Naive thymus-derived CD4-positive, alpha-beta T cell (primary cell): ENCODE measurements at regions of chr12 and their contacts with region 1.

Region 1: DNA sequence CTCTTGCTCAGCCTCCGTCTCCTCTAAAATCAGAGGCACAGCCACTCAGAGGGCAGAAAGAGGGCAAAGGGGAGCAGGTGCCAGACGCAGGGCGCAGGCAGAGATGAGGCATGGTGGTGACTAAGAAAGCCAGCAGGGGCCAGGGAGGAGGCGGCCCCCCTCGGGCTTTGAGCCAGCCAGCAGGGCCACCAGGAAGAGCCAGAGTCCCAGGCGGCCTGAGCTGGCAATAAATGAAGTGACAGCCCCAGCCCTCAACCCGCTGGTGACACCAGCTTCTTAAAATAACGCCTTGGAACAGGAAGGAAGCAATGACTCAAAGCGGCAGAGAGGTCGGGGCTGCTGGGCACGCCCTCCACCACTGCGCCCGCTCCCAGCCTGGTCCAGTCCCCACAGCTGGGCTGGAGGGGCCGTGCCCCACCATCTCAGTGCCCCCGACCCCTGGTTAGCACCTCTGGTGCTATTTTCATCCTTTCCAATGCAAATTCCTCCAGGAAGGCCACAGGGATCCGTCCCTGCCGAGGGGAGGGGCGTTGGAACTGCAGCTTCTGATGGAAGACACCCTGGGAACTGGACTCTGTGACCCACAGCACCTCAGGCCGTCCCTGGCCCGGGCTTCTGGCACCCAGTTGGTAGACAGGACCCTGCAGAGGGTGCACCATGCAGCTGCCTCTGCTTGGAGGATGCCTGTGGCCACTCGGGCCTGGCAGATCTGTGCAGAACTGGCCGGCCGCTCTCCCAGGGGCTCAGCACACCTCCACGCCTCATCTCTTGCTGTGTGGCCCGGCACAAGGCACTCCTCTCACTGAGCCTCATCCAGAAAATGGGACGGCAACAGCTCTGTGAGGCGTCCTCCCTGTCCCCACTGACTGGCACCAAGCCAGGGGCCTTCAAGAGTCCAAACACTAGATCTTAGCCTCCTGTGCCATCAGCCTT is 113.7 kb downstream of the NCOR2 start:
- DNase-seq: peak; percentile 47 to 82 (median 61)
- ATAC-seq: peak; percentile 78
- H3K4me3 ChIP-seq: peak overlapping the region; percentile 58
- H3K4me3 Mint-ChIP-seq: peak overlapping the region; percentile 42 to 77 (median 66)
- H3K27ac ChIP-seq: peak overlapping the region; percentile 48
- H3K27ac Mint-ChIP-seq: peak overlapping the region; percentile 10 to 87 (median 63)
- H3K4me1 ChIP-seq: peaks cover 51 to 74% of the 10 kb centered on the region in 2 donors
- H3K4me1 Mint-ChIP-seq: peaks cover 23 to 74% (median 55%) of the 10 kb centered on the region in 7 donors
- H3K27me3 ChIP-seq: no peaks in the 10 kb centered on the region
- H3K27me3 Mint-ChIP-seq: no peaks in the 10 kb centered on the region

Region 2: DNA sequence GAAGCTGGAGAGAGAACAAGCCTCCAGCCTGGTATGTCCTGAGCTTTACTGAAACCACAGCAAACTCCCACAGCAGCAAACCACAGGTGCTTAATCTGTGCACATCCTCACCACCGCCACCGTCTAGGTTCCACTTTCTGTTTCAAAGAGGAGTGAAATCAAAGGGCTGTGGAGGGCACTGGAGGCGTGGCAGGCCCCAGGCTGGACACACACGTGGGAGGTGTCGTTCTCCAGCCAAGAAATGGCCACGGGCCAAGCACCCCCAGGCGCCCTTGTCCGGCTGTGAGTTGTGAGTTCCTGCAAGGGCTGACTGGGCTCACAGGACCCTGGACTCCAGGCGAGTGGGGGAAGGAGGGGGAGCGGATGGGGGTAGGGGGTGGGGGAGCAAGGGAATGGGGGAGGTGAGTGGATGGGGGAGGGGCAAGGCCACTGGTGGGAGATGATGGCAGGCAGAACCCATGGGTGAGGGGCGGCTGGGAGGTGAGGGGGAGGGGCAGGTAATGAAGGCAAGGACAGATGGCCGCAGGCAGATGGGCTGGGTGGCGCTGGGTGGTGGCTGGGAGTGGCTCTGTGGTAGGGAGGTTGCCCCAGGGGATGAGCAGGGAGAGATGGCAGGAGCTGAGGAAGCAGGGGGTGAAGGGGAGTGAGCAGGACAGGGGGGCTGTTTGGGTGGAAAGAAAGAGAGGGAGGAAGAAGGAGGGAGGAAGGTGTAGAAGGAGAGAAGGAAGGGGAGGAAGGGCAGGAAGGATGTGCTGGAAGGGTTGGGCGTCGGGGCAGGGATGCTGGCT is 27.0 kb after region 1 on chr12:
- CTCF ChIA-PET with region 1: no interaction called
- POLR2A ChIA-PET with region 1: no interaction called
- intact Hi-C with region 1: loop called in 1 of 2 experiments (anchors 2 kb)
- DNase-seq: peak in 1 of 9 donors; percentile 50
- ATAC-seq: peak; percentile 40
- H3K4me3 ChIP-seq: no peak overlapping the region
- H3K4me3 Mint-ChIP-seq: peak overlapping the region in 2 of 10 donors; percentile 33 to 45
- H3K27ac ChIP-seq: no peak overlapping the region
- H3K27ac Mint-ChIP-seq: peak overlapping the region in 5 of 9 donors; percentile 19 to 78 (median 43)
- H3K4me1 ChIP-seq: peaks cover 0 to 8% of the 10 kb centered on the region in 2 donors
- H3K4me1 Mint-ChIP-seq: peaks cover 15 to 37% (median 31%) of the 10 kb centered on the region in 7 donors
- H3K27me3 ChIP-seq: no peaks in the 10 kb centered on the region
- H3K27me3 Mint-ChIP-seq: no peaks in the 10 kb centered on the region

Region 3: GRCh38 chr12:124609041-124609995 is 155.6 kb after region 1 on chr12:
- CTCF ChIA-PET with region 1: no interaction called
- POLR2A ChIA-PET with region 1: no interaction called
- intact Hi-C with region 1: loop called in 1 of 2 experiments (anchors 5 kb)
- DNase-seq: peak; percentile 38 to 94 (median 92)
- ATAC-seq: peak; percentile 95
- H3K4me3 ChIP-seq: peak overlapping the region; percentile 29
- H3K4me3 Mint-ChIP-seq: peak overlapping the region; percentile 50 to 90 (median 83)
- H3K27ac ChIP-seq: no peak overlapping the region
- H3K27ac Mint-ChIP-seq: peak overlapping the region in 8 of 9 donors; percentile 57 to 85 (median 70)
- H3K4me1 ChIP-seq: peaks cover 23 to 31% of the 10 kb centered on the region in 2 donors
- H3K4me1 Mint-ChIP-seq: peaks cover 18 to 59% (median 52%) of the 10 kb centered on the region in 7 donors
- H3K27me3 ChIP-seq: no peaks in the 10 kb centered on the region
- H3K27me3 Mint-ChIP-seq: peaks cover 0 to 20% (median 0%) of the 10 kb centered on the region in 5 donors

Region 4: GRCh38 chr12:124884587-124885438 is 431.1 kb after region 1 on chr12:
- CTCF ChIA-PET with region 1: no interaction called
- POLR2A ChIA-PET with region 1: no interaction called
- intact Hi-C with region 1: no loop called
- DNase-seq: no peak
- ATAC-seq: peak; percentile 38
- H3K4me3 ChIP-seq: no peak overlapping the region
- H3K4me3 Mint-ChIP-seq: peak overlapping the region in 3 of 10 donors; percentile 5 to 33 (median 29)
- H3K27ac ChIP-seq: no peak overlapping the region
- H3K27ac Mint-ChIP-seq: peak overlapping the region in 2 of 9 donors; percentile 33 to 65
- H3K4me1 ChIP-seq: no peaks in the 10 kb centered on the region
- H3K4me1 Mint-ChIP-seq: peaks cover 0 to 32% (median 19%) of the 10 kb centered on the region in 7 donors
- H3K27me3 ChIP-seq: no peaks in the 10 kb centered on the region
- H3K27me3 Mint-ChIP-seq: no peaks in the 10 kb centered on the region